ENCODE measurements at regions of chr6 and their contacts with region 1.

Region 1: DNA sequence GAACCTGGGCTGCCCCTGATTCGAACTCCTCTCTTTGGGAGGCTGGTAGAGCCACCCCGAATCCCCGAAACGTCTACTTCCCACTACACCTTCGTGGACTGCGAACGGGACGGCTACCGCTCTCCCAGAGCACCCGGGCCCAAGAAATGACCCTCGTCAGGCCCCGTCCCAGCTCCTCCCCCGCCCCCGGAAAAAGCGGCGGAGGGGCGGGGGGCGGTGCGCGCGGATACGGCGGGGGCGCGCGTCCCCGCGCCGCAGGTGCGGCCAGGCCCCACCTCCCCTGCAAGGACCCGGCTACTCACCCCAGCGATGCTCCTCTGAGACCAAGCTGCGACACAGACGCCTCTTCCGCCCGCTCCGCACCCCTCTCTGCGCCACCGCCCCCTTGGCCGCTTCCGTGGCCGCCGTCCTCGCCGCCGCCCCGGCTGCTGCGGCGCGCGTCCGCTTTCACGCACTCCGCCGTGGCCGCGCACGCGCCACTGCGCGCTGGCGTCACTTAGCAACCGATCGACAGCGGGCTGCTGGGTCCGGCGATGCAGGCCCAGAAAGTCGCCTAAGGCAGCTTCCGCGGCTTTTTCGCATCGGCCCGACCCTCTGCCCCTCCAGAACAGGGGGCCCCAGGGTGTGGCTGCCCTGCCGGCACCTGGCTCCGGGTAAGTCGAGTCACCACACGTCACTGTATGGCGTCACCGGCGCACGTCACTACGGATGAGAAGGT is at the start of gene BTBD9:
- DNase-seq: peak; percentile 85 to 91 (median 87)
- ATAC-seq: peak; percentile 83 to 94 (median 92)
- H3K4me3 ChIP-seq: peak within 1 kb of the TSS; percentile 68 to 96 (median 84)
- H3K27ac ChIP-seq: peak within 1 kb of the TSS; percentile 91 to 98 (median 96)
- H3K4me1 ChIP-seq: peaks cover 0 to 39% (median 20%) of the 10 kb centered on the region in 12 donors
- H3K27me3 ChIP-seq: no peaks in the 10 kb centered on the region
- CTCF ChIP-seq: no peak
- POLR2A ChIP-seq: peak in 1 of 2 donors; percentile 65
- total RNA-seq, gene BTBD9: 13.4 to 23.3 (median 20.0) TPM

Region 2: GRCh38 chr6:38603966-38604365 is 35.7 kb before region 1 on chr6:
- intact Hi-C with region 1: loop called in 1 of 10 experiments (anchors 5 kb)
- DNase-seq: no peak
- ATAC-seq: peak in 2 of 4 donors; percentile 42 to 48
- H3K4me3 ChIP-seq: no peak overlapping the region
- H3K27ac ChIP-seq: peak overlapping the region in 1 of 12 donors; percentile 23
- H3K4me1 ChIP-seq: peaks cover 0 to 34% (median 9%) of the 10 kb centered on the region in 12 donors
- H3K27me3 ChIP-seq: no peaks in the 10 kb centered on the region
- CTCF ChIP-seq: no peak
- POLR2A ChIP-seq: no peak

Region 3: GRCh38 chr6:38702558-38703397 is 63.1 kb after region 1 on chr6 and contains the start of gene GLO1:
- intact Hi-C with region 1: loop called in 1 of 10 experiments (anchors 5 kb)
- DNase-seq: peak; percentile 97 to 98 (median 98)
- ATAC-seq: peak; percentile 100
- H3K4me3 ChIP-seq: peak within 1 kb of the TSS; percentile 48 to 95 (median 80)
- H3K27ac ChIP-seq: peak within 1 kb of the TSS in 11 of 12 donors; percentile 66 to 96 (median 86)
- H3K4me1 ChIP-seq: peaks cover 0 to 13% (median 1%) of the 10 kb centered on the region in 12 donors
- H3K27me3 ChIP-seq: peaks cover 0 to 3% (median 0%) of the 10 kb centered on the region in 9 donors
- CTCF ChIP-seq: no peak
- POLR2A ChIP-seq: peak; percentile 39 to 95
- total RNA-seq, gene GLO1: 77.8 to 123 (median 86.9) TPM

Measured in heart left ventricle (tissue), 16 donors.